ENCODE measurements at regions of chr3 and their contacts with region 1.

Region 1: DNA sequence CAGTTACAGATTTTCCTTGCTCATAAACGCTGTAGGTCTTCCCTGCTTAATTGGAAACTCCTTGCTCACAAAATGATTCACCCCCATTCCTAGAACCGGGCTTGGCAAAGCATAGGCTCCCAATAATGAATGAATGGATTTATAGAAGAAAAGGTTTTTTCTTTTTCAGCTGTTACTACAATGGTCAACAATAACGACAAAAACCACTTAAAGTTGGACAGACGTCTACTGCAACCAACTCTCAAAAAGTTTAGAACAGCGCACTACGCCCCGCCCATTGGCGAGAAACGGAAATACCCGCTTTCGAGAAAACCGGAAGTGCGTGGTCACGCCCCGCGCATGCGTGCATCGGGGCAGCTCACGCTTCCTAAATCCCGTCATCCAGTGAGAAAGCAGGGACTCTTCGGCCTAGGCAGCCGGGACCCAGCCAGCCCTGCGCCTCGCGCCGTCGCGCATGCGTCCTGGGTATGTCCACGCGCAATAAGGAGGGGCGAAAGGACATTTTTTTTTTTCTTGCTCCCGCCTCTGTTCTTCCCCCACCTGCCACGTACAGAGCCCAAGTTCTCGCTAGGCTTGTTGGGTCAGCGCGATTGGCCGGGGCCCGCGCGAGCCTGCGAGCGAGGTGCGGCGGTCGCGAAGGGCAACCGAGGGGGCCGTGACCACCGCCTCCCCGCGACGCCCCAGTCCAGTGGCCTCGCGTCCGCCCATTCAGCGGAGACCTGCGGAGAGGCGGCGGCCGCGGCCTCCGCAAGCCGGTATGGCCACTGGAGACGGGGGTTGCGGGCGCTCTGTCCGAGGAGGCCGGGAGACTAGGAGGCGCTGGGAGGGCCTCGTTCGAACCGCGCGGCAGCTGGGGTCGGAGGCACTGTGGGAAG is at the start of gene TFG:
- DNase-seq: peak; percentile 100
- H3K4me3 Mint-ChIP-seq: peak within 1 kb of the TSS; percentile 88
- H3K27ac Mint-ChIP-seq: peak within 1 kb of the TSS; percentile 94
- H3K4me1 Mint-ChIP-seq: peaks cover 33% of the 10 kb centered on the region
- H3K27me3 Mint-ChIP-seq: no peaks in the 10 kb centered on the region
- total RNA-seq, gene TFG: 71.5 and 72.2 TPM in 2 replicates

Region 2: GRCh38 chr3:100316641-100317069 is 392.5 kb before region 1 on chr3:
- intact Hi-C with region 1: loop called (anchors 5 kb)
- DNase-seq: peak; percentile 86
- H3K4me3 Mint-ChIP-seq: peak overlapping the region; percentile 40
- H3K27ac Mint-ChIP-seq: peak overlapping the region; percentile 55
- H3K4me1 Mint-ChIP-seq: peaks cover 11% of the 10 kb centered on the region
- H3K27me3 Mint-ChIP-seq: no peaks in the 10 kb centered on the region

Region 3: DNA sequence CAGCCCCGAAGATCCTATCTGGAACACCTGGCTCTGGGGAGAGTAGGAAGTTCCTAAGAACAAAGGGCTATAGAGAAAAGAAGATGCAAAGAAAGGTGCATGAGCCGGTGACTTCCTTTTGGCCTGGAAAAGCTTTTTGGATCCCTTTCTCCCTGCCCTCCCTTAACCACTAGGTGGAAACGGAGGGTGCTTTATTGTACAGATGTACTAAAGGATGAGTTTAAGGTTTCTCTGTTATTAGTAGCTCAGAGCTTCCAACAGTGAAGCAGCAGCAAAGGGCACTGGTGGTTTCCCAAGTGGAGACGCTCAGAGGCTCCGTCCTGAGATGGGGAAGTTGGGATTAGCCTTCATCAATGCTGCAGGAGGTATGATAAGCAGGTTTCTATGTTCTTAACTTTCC is 105.7 kb before region 1 on chr3:
- intact Hi-C with region 1: loop called (anchors 2 kb)
- DNase-seq: no peak
- H3K4me3 Mint-ChIP-seq: peak overlapping the region; percentile 72
- H3K27ac Mint-ChIP-seq: peak overlapping the region; percentile 83
- H3K4me1 Mint-ChIP-seq: peaks cover 27% of the 10 kb centered on the region
- H3K27me3 Mint-ChIP-seq: peaks cover under 1% of the 10 kb centered on the region

Region 4: DNA sequence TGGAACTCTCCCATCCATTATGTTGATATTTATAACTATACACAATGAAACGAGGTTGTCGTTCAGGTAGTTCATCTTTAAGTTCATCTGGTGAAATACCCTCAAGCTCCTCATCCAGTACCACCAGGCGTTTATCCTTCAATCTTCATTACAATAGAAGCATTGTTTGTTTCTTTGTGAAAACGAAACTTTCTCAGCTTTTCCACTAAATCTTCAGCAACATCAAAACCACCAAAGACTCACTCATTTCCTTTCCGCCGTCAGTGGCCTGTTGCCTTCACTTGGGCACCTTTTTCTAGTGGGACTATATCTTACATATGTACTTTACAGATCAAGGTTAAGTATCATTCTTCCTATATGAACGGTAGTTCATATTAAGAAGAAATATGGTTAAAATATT is 44.0 kb before region 1 on chr3:
- intact Hi-C with region 1: loop called (anchors 1 kb)
- DNase-seq: peak; percentile 86
- H3K4me3 Mint-ChIP-seq: peak overlapping the region; percentile 59
- H3K27ac Mint-ChIP-seq: peak overlapping the region; percentile 81
- H3K4me1 Mint-ChIP-seq: peaks cover 27% of the 10 kb centered on the region
- H3K27me3 Mint-ChIP-seq: no peaks in the 10 kb centered on the region

Region 5: GRCh38 chr3:100737334-100737733 is 28.1 kb after region 1 on chr3:
- intact Hi-C with region 1: no loop called
- DNase-seq: no peak
- H3K4me3 Mint-ChIP-seq: no peak overlapping the region
- H3K27ac Mint-ChIP-seq: no peak overlapping the region
- H3K4me1 Mint-ChIP-seq: peaks cover 13% of the 10 kb centered on the region
- H3K27me3 Mint-ChIP-seq: no peaks in the 10 kb centered on the region

Region 6: DNA sequence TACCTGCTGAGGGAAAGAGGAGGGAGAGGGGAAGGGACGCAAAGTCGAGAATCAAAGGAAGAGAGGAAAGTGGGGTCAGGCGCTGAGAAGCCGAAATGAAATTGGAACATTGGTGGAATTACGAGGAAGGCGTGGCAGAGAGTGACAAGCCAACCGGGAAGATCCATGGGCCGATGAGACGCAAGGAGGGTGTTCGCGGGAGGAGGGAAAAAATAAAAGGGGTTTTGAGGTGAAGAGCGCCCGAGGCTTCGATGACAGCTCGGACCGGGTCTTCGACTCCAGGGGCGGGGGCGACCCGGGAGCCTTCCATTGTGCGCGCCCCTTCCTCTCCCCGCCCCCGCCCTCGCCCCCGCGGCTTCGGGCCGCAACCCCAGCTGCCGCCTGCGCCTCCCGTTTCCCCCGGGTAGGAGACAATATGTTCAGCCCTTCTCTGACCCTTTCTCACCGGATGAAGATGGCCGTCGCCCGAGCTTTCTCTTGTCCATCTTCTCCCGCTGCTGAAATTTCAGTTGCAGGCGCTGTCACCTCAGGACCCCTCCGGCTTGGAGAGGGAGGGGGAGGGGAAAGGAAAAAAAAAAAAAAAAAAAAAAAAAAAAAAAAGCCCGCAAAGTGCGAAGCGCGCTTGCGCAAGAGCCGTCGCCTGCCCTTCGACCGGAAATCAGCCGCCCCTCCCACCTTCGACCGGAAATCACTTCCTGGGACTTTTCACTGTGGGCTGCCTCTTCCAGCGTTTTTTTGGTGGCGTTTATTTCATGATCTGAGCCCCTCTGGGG is 803.6 kb after region 1 on chr3 and contains the start of gene SENP7:
- intact Hi-C with region 1: loop called (anchors 5 kb)
- DNase-seq: peak; percentile 94
- H3K4me3 Mint-ChIP-seq: peak within 1 kb of the TSS; percentile 99
- H3K27ac Mint-ChIP-seq: peak within 1 kb of the TSS; percentile 100
- H3K4me1 Mint-ChIP-seq: peaks cover 27% of the 10 kb centered on the region
- H3K27me3 Mint-ChIP-seq: peaks cover 3% of the 10 kb centered on the region
- total RNA-seq, gene SENP7: 8.1 and 9.5 TPM in 2 replicates

Region 7: DNA sequence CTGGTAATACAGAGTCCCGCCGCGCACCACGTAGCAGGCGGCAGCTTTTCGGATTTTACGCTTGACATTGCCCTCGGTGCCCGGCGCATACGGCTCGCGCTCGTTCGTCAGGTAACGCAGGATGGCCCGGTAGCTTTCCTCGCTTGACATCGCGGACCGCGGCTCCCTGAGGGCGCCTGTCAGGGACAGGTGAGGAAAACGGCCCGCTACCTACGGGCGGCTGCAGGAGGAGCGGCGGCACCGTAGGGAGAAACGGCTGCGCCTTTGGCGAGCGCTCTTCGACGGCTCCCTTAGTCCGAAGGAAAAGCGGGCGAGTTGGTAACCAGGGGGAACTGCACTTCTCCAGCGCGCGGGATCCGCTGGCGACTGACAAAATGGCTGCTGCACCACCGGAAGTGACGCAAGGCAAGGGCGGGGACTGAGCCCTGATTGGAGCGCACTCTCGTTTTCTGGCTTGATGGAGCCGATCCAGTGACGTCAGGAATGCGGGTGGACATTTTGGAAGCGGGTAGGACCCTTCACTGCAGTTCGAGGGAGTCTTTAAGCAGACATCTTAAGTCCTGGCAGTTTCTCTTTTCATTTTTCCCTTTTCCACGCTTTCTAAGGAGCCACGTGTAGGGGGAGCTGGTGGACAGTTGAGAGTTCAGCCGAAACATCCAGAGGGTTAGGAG is 967.7 kb after region 1 on chr3 and contains the start of gene ZBTB11:
- intact Hi-C with region 1: loop called (anchors 1 kb)
- DNase-seq: peak; percentile 100
- H3K4me3 Mint-ChIP-seq: peak within 1 kb of the TSS; percentile 89
- H3K27ac Mint-ChIP-seq: peak within 1 kb of the TSS; percentile 97
- H3K4me1 Mint-ChIP-seq: peaks cover 36% of the 10 kb centered on the region
- H3K27me3 Mint-ChIP-seq: no peaks in the 10 kb centered on the region
- total RNA-seq, gene ZBTB11: 29.0 and 30.2 TPM in 2 replicates